ENCODE measurements at regions of chr7 and their contacts with region 1.

Region 1: GRCh38 chr7:67045496-67045995 is 48.9 kb downstream of the TYW1 start:
- DNase-seq: no peak
- ATAC-seq: no peak
- H3K4me3 ChIP-seq: no peak overlapping the region
- H3K27ac ChIP-seq: no peak overlapping the region
- H3K4me1 ChIP-seq: peaks cover 7 to 10% of the 10 kb centered on the region in 2 experiments; a peak in 4 of 5 replicates
- H3K27me3 ChIP-seq: no peaks in the 10 kb centered on the region
- CTCF ChIP-seq: no peak
- EP300 ChIP-seq: no peak
- POLR2A ChIP-seq: no peak
- RAD21 ChIP-seq: no peak

Region 2: DNA sequence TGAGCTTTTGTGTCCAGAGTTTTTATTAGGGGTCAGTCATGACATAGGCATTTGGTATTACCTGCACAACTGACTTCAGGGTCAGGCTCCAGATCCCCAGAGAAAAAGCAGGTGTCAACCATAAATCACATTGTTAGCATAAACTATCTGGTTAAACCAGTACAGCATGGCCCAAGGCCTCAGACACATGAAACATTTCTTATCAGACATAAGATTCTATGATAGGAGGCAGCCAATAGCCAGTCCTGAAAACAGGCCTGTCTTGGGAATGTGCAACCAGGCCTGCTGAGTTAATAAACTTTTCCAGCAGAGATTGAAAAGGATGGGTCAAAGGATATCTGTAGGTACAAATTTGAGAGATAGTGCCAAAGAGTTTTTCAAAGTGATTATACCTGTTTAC is 724.3 kb before region 1 on chr7:
- CTCF ChIA-PET with region 1: no interaction called
- POLR2A ChIA-PET with region 1: no interaction called
- in situ Hi-C with region 1: no loop called
- intact Hi-C with region 1: no loop called
- DNase-seq: no peak
- ATAC-seq: no peak
- H3K4me3 ChIP-seq: no peak overlapping the region
- H3K27ac ChIP-seq: no peak overlapping the region
- H3K4me1 ChIP-seq: no peaks in the 10 kb centered on the region
- H3K27me3 ChIP-seq: peaks cover 4 to 5% of the 10 kb centered on the region in 2 experiments; a peak in 3 of 5 replicates
- CTCF ChIP-seq: no peak
- EP300 ChIP-seq: no peak
- POLR2A ChIP-seq: no peak
- RAD21 ChIP-seq: no peak

Region 3: GRCh38 chr7:66920769-66921395 is 124.7 kb before region 1 on chr7 and contains the start of gene TMEM248:
- CTCF ChIA-PET with region 1: no interaction called
- POLR2A ChIA-PET with region 1: no interaction called
- in situ Hi-C with region 1: no loop called
- intact Hi-C with region 1: no loop called
- DNase-seq: peak; percentile 86 to 97 (median 89)
- ATAC-seq: peak; percentile 82
- H3K4me3 ChIP-seq: peak within 1 kb of the TSS; percentile 79
- H3K27ac ChIP-seq: peak within 1 kb of the TSS; percentile 90
- H3K4me1 ChIP-seq: peaks cover 18 to 32% of the 10 kb centered on the region in 2 experiments; a peak in 4 of 5 replicates
- H3K27me3 ChIP-seq: no peaks in the 10 kb centered on the region; a peak in 1 of 5 replicates
- CTCF ChIP-seq: no peak
- EP300 ChIP-seq: peak; percentile 61
- POLR2A ChIP-seq: peak; percentile 94
- RAD21 ChIP-seq: no peak
- polyA plus RNA-seq, gene TMEM248: 6.3 to 8.2 TPM

Region 4: DNA sequence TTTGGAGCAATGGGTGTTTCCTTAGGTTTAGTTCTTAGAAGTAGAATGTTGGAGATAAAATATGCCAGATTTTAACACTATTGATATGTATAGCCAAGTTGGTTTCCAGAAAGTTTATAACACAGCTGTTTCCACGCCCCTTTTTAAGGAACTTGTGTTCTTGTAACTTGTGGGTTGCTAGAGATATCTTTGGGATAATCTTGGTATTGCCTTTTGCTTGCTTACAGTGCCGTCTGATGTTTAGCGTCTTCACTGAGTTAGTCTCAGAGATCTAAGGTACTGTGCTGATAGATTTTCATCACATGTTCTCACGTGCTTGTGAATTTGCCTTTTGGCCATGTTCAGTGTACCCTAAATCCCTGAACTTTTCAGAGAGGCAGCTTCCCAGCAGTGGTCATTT is 112.1 kb before region 1 on chr7:
- CTCF ChIA-PET with region 1: no interaction called
- POLR2A ChIA-PET with region 1: no interaction called
- in situ Hi-C with region 1: no loop called
- intact Hi-C with region 1: no loop called
- DNase-seq: no peak
- ATAC-seq: 0 out of 3 replicates have a peak, but pooled peaks have one; percentile 4
- H3K4me3 ChIP-seq: no peak overlapping the region
- H3K27ac ChIP-seq: peak overlapping the region; percentile 0; the same call in 1 of the 3 replicates
- H3K4me1 ChIP-seq: peaks cover 18 to 25% of the 10 kb centered on the region in 2 experiments
- H3K27me3 ChIP-seq: no peaks in the 10 kb centered on the region
- CTCF ChIP-seq: no peak
- EP300 ChIP-seq: no peak
- POLR2A ChIP-seq: no peak
- RAD21 ChIP-seq: no peak

Region 5: DNA sequence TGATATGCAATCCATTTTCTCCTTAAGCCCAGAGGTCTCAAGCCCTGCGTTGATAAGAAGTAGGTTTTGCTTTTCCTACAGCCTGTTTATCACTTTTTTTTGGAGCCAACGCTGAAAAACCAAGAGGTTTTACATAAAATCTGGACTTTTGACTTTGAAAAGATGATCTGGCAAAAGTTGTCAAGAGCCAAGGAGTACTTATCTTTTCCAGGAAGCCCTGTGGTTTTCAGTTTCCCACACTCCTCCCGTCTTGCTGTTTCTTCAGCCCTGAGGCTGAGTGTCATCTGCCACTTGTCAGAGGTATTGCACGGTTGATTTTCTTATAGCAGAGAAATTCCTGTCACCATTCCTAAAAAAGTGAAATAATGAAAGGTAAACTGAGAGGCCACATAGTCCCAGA is 59.8 kb after region 1 on chr7:
- CTCF ChIA-PET with region 1: no interaction called
- POLR2A ChIA-PET with region 1: no interaction called
- in situ Hi-C with region 1: no loop called
- intact Hi-C with region 1: loop called (anchors 10 kb)
- DNase-seq: peak in 2 of 4 experiments; percentile 35 to 68
- ATAC-seq: peak; percentile 68
- H3K4me3 ChIP-seq: no peak overlapping the region
- H3K27ac ChIP-seq: no peak overlapping the region
- H3K4me1 ChIP-seq: peaks cover 0 to 5% of the 10 kb centered on the region in 2 experiments; a peak in 2 of 5 replicates
- H3K27me3 ChIP-seq: no peaks in the 10 kb centered on the region
- CTCF ChIP-seq: no peak
- EP300 ChIP-seq: 0 out of 2 replicates have a peak, but pooled peaks have one; percentile 14
- POLR2A ChIP-seq: no peak
- RAD21 ChIP-seq: peak in 1 of 2 experiments; percentile 23; a peak in 1 of 4 replicates